ENCODE measurements at regions of chr2 and their contacts with region 1.

Region 1: GRCh38 chr2:74345272-74345943 is 2.2 kb upstream of the SLC4A5 start:
- DNase-seq: no peak
- H3K4me3 ChIP-seq: no peak overlapping the region
- H3K27ac ChIP-seq: no peak overlapping the region
- H3K4me1 ChIP-seq: no peaks in the 10 kb centered on the region
- H3K27me3 ChIP-seq: peaks cover 36% of the 10 kb centered on the region; the same call in 1 of the 2 replicates
- CTCF ChIP-seq: no peak

Region 2: DNA sequence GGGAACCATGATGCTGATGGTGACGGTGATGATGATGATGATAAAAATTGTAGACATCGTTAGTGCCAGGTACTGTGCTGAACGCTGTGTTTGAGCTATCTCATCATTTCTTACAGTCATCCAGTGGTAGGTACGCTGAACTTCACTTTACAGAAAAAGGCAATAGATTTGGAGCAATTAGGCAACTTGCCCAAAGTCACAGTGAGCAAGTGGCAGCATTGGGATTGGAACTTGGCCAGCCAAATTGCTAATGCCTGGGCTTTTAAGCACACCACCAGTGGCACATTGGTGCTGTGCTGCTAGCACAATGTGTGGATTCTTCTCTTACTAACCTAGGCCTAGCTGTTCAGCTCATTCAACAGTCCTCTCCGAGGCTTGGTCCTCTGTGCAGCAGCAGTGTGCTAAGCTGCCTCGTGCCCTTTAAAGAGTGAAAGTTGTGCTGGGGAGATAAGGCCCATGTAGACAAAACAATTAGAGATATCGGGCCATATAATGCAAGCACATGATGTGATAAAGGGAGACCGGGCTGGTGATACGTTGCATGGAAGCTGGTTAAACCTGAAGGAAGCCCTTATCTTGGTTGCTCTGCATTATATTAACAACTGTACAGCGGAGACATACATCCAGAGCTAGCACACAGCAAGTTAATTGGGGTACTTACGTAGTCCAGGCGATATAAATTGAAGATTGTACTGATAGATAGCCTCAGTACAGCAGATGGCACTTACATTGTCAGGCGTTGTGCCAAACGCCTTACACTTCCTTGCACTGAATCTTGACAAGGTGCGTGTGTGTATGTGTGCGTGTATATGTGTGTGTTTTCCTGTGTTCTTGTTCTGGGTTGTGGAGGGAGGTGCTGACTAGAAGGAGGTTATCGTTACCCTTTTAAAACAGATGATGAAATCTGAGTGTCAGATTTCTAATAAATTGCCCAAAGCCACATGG is 516.9 kb after region 1 on chr2:
- CTCF ChIA-PET with region 1: no interaction called
- POLR2A ChIA-PET with region 1: interaction called, 10 read pairs
- intact Hi-C with region 1: no loop called
- DNase-seq: no peak
- H3K4me3 ChIP-seq: no peak overlapping the region
- H3K27ac ChIP-seq: peak overlapping the region; percentile 92
- H3K4me1 ChIP-seq: peaks cover 55% of the 10 kb centered on the region
- H3K27me3 ChIP-seq: no peaks in the 10 kb centered on the region
- CTCF ChIP-seq: no peak